RWPE1 (cell line): ENCODE measurements at regions of chr18 and their contacts with region 1.

Region 1: GRCh38 chr18:22088029-22088428 is 81.4 kb upstream of the GATA6 start:
- DNase-seq: no peak
- H3K27ac ChIP-seq: no peak overlapping the region
- CTCF ChIP-seq: no peak

Region 2: GRCh38 chr18:22145160-22145559 is 57.1 kb after region 1 on chr18:
- CTCF ChIA-PET with region 1: interaction called, 10 read pairs
- POLR2A ChIA-PET with region 1: no interaction called
- DNase-seq: no peak
- H3K27ac ChIP-seq: no peak overlapping the region
- CTCF ChIP-seq: no peak